ENCODE measurements at regions of chr6 and their contacts with region 1.

Region 1: DNA sequence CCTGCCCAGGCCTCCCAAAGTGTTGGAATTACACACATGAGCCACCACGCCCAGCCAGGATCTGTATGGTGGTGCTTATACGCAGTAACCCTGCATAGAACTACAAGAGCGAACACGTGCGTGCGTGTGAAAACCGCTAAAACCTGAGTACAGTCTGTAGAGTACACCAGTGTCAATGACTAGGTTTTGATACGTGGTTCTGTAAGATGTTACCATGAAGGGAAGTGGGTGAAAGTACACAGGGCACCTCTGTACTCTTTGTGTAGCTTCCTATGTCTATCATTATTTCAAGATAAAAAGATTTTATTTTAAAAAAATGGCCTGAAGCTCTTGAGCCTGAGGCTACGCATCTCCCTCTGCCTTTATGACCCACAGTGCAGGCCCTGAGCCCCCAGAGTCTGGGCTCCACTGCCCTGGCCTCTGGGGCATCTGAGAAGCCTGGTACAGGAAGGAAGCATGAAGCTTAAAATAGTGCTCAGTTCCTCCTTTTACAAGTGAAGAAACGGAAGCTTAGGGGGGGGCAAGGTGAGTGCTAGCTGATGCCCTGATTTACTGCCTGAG is 21.6 kb downstream of the LY86 start:
- DNase-seq: peak in 12 of 14 experiments; percentile 12 to 81 (median 46)
- ATAC-seq: peak; percentile 69
- H3K4me3 ChIP-seq: no peak overlapping the region
- H3K4me3 Mint-ChIP-seq: peak overlapping the region; percentile 80
- H3K27ac ChIP-seq: peak overlapping the region; percentile 33 to 53
- H3K27ac Mint-ChIP-seq: peak overlapping the region; percentile 91
- H3K4me1 ChIP-seq: peaks cover 65% of the 10 kb centered on the region
- H3K4me1 Mint-ChIP-seq: peaks cover 69% of the 10 kb centered on the region
- H3K27me3 ChIP-seq: no peaks in the 10 kb centered on the region
- H3K27me3 Mint-ChIP-seq: no peaks in the 10 kb centered on the region
- CTCF ChIP-seq: no peak

Region 2: GRCh38 chr6:6556738-6557505 is 53.2 kb before region 1 on chr6:
- CTCF ChIA-PET with region 1: no interaction called
- POLR2A ChIA-PET with region 1: interaction called, 3 read pairs
- intact Hi-C with region 1: loop called in 1 of 2 experiments (anchors 2 kb)
- DNase-seq: peak in 13 of 14 experiments; percentile 9 to 71 (median 26)
- ATAC-seq: peak; percentile 76
- H3K4me3 ChIP-seq: no peak overlapping the region
- H3K4me3 Mint-ChIP-seq: no peak overlapping the region
- H3K27ac ChIP-seq: no peak overlapping the region
- H3K27ac Mint-ChIP-seq: no peak overlapping the region
- H3K4me1 ChIP-seq: no peaks in the 10 kb centered on the region
- H3K4me1 Mint-ChIP-seq: peaks cover 16% of the 10 kb centered on the region
- H3K27me3 ChIP-seq: no peaks in the 10 kb centered on the region
- H3K27me3 Mint-ChIP-seq: no peaks in the 10 kb centered on the region
- CTCF ChIP-seq: peak; percentile 93

Region 3: DNA sequence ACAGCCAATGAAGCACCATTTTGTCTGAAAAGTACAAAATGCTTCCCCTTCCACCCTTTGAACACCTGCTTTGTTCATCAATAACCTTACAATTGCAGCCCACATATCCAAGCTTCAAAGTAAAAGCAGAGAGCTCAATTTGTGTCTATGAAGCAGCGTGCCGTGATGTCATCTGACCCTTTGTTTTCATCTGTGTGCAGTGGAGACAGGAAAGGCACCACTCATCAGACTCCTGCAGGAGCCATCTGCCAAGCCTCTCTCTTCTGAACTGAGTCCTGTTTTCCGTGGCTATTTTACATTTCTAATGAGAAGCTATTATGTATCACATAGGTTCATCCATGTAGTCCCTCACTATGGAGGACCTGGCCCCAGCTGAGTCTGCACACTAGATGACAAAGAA is 29.1 kb before region 1 on chr6:
- CTCF ChIA-PET with region 1: no interaction called
- POLR2A ChIA-PET with region 1: interaction called, 70 read pairs
- intact Hi-C with region 1: loop called in 1 of 2 experiments (anchors 2 kb)
- DNase-seq: peak in 5 of 14 experiments; percentile 19 to 54 (median 37)
- ATAC-seq: peak; percentile 84
- H3K4me3 ChIP-seq: no peak overlapping the region
- H3K4me3 Mint-ChIP-seq: peak overlapping the region; percentile 1
- H3K27ac ChIP-seq: no peak overlapping the region
- H3K27ac Mint-ChIP-seq: peak overlapping the region; percentile 85
- H3K4me1 ChIP-seq: peaks cover 13% of the 10 kb centered on the region
- H3K4me1 Mint-ChIP-seq: peaks cover 54% of the 10 kb centered on the region
- H3K27me3 ChIP-seq: no peaks in the 10 kb centered on the region
- H3K27me3 Mint-ChIP-seq: no peaks in the 10 kb centered on the region
- CTCF ChIP-seq: no peak

Region 4: DNA sequence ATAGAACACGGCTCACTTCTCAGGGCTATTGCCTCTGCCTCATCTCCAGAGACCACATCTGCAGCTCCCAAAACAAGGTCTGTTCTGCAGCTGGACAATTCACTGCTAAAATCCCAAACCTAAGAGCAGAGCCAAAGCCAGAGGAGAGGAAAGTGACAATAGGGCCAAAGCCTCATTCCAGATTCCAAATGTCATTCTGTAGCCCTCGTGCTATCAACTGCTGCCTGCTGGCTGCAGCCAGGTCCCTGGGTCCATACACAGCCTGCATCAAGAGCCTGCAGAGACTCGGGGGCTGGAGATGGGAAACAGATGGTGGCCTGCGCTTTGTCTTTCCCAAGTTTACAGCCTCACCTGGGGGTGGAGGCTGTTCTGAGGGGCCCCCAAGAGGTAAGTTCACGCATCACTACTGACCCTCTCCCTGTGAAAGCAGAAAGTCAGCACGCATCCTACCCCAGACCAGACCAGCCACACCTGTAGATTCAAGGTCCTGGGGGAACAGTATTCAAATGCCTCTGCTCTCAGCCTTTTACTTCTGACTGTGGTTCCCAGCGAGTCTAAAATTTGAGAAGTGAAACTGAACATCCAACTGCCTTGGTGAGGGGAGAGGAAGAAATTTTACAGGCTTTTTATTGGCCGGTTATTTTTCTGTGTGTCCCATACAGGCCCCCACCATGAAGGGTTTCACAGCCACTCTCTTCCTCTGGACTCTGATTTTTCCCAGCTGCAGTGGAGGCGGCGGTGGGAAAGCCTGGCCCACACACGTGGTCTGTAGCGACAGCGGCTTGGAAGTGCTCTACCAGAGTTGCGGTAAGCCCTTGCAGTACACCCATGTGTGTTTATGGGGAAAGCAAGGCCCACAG is 21.8 kb before region 1 on chr6 and contains the start of gene LY86:
- CTCF ChIA-PET with region 1: no interaction called
- POLR2A ChIA-PET with region 1: interaction called, 70 read pairs
- intact Hi-C with region 1: loop called in 1 of 2 experiments (anchors 2 kb)
- DNase-seq: peak in 5 of 14 experiments; percentile 5 to 48 (median 25)
- ATAC-seq: peak; percentile 59
- H3K4me3 ChIP-seq: peak within 1 kb of the TSS; percentile 34
- H3K4me3 Mint-ChIP-seq: peak within 1 kb of the TSS; percentile 84
- H3K27ac ChIP-seq: peak within 1 kb of the TSS; percentile 7 to 39
- H3K27ac Mint-ChIP-seq: peak within 1 kb of the TSS; percentile 95
- H3K4me1 ChIP-seq: peaks cover 49% of the 10 kb centered on the region
- H3K4me1 Mint-ChIP-seq: peaks cover 87% of the 10 kb centered on the region
- H3K27me3 ChIP-seq: no peaks in the 10 kb centered on the region
- H3K27me3 Mint-ChIP-seq: no peaks in the 10 kb centered on the region
- CTCF ChIP-seq: no peak
- total RNA-seq, gene LY86: 1.3 to 2.1 TPM

Region 5: GRCh38 chr6:6596529-6597314 is 13.4 kb before region 1 on chr6:
- CTCF ChIA-PET with region 1: interaction called, 3 read pairs
- POLR2A ChIA-PET with region 1: interaction called, 12 read pairs
- intact Hi-C with region 1: no loop called
- DNase-seq: peak in 4 of 14 experiments; percentile 13 to 48 (median 23)
- ATAC-seq: peak; percentile 88
- H3K4me3 ChIP-seq: no peak overlapping the region
- H3K4me3 Mint-ChIP-seq: peak overlapping the region; percentile 50
- H3K27ac ChIP-seq: no peak overlapping the region
- H3K27ac Mint-ChIP-seq: peak overlapping the region; percentile 67
- H3K4me1 ChIP-seq: peaks cover 34% of the 10 kb centered on the region
- H3K4me1 Mint-ChIP-seq: peaks cover 67% of the 10 kb centered on the region
- H3K27me3 ChIP-seq: no peaks in the 10 kb centered on the region
- H3K27me3 Mint-ChIP-seq: no peaks in the 10 kb centered on the region
- CTCF ChIP-seq: no peak

Region 6: GRCh38 chr6:6654599-6655575 is 44.8 kb after region 1 on chr6:
- CTCF ChIA-PET with region 1: interaction called, 3 read pairs
- POLR2A ChIA-PET with region 1: interaction called, 73 read pairs
- intact Hi-C with region 1: loop called (anchors 1 to 5 kb)
- DNase-seq: peak in 4 of 14 experiments; percentile 13 to 54 (median 34)
- ATAC-seq: peak; percentile 36
- H3K4me3 ChIP-seq: no peak overlapping the region
- H3K4me3 Mint-ChIP-seq: peak overlapping the region; percentile 75
- H3K27ac ChIP-seq: no peak overlapping the region
- H3K27ac Mint-ChIP-seq: peak overlapping the region; percentile 89
- H3K4me1 ChIP-seq: peaks cover 37% of the 10 kb centered on the region
- H3K4me1 Mint-ChIP-seq: peaks cover 88% of the 10 kb centered on the region
- H3K27me3 ChIP-seq: no peaks in the 10 kb centered on the region
- H3K27me3 Mint-ChIP-seq: no peaks in the 10 kb centered on the region
- CTCF ChIP-seq: no peak

Region 7: DNA sequence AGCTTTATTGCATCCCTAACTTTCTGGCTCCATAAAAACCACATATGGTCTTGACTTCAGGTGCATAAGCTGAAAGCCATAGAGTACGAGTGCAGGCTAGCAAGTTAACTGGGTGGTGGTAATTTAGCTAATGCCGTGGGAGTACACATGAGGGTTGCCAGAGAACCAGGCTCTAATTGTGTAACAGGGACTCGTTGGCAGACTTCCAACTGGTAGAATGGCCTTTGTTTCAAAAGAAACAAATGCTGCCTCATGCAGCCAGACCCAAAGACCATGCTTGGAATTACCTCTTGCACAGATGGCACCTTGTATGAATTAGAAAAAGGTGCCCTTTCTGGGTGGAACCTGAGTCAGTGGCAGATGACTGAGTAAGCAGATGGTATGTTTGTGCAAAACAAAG is 51.6 kb after region 1 on chr6:
- CTCF ChIA-PET with region 1: interaction called, 3 read pairs
- POLR2A ChIA-PET with region 1: interaction called, 73 read pairs
- intact Hi-C with region 1: loop called in 1 of 2 experiments (anchors 1 kb)
- DNase-seq: peak in 2 of 14 experiments; percentile 16 to 35
- ATAC-seq: no peak
- H3K4me3 ChIP-seq: no peak overlapping the region
- H3K4me3 Mint-ChIP-seq: no peak overlapping the region
- H3K27ac ChIP-seq: no peak overlapping the region
- H3K27ac Mint-ChIP-seq: peak overlapping the region; percentile 89
- H3K4me1 ChIP-seq: peaks cover 8% of the 10 kb centered on the region
- H3K4me1 Mint-ChIP-seq: peaks cover 64% of the 10 kb centered on the region
- H3K27me3 ChIP-seq: no peaks in the 10 kb centered on the region
- H3K27me3 Mint-ChIP-seq: no peaks in the 10 kb centered on the region
- CTCF ChIP-seq: no peak

Measured in CD4-positive, alpha-beta T cell (primary cell).